ENCODE measurements at regions of chr22 and their contacts with region 1.

Region 1: GRCh38 chr22:23178512-23179254 is 1.6 kb upstream of the BCR start:
- DNase-seq: peak; percentile 55 to 84 (median 67)
- ATAC-seq: peak; percentile 57 to 69 (median 64)
- H3K4me3 ChIP-seq: peak overlapping the region in 1 of 12 donors; percentile 2
- H3K27ac ChIP-seq: peak overlapping the region in 3 of 12 donors; percentile 64 to 85 (median 84)
- H3K4me1 ChIP-seq: peaks cover 11 to 46% (median 41%) of the 10 kb centered on the region in 12 donors
- H3K27me3 ChIP-seq: no peaks in the 10 kb centered on the region
- CTCF ChIP-seq: peak; percentile 94 to 99 (median 97)
- POLR2A ChIP-seq: no peak

Region 2: GRCh38 chr22:23219822-23220484 is 41.3 kb after region 1 on chr22:
- intact Hi-C with region 1: loop called in 7 of 10 experiments (anchors 5 kb)
- DNase-seq: peak in 2 of 5 donors; percentile 40 to 56
- ATAC-seq: no peak
- H3K4me3 ChIP-seq: no peak overlapping the region
- H3K27ac ChIP-seq: peak overlapping the region in 8 of 12 donors; percentile 11 to 69 (median 23)
- H3K4me1 ChIP-seq: peaks cover 36 to 100% (median 87%) of the 10 kb centered on the region in 12 donors
- H3K27me3 ChIP-seq: no peaks in the 10 kb centered on the region
- CTCF ChIP-seq: no peak
- POLR2A ChIP-seq: peak in 1 of 2 donors; percentile 14

Region 3: GRCh38 chr22:23225724-23226496 is 47.2 kb after region 1 on chr22:
- intact Hi-C with region 1: loop called in 5 of 10 experiments (anchors 5 kb)
- DNase-seq: peak in 4 of 5 donors; percentile 41 to 80 (median 54)
- ATAC-seq: peak; percentile 34 to 80 (median 74)
- H3K4me3 ChIP-seq: no peak overlapping the region
- H3K27ac ChIP-seq: peak overlapping the region; percentile 57 to 83 (median 70)
- H3K4me1 ChIP-seq: peaks cover 23 to 72% (median 59%) of the 10 kb centered on the region in 12 donors
- H3K27me3 ChIP-seq: no peaks in the 10 kb centered on the region
- CTCF ChIP-seq: no peak
- POLR2A ChIP-seq: no peak

Region 4: DNA sequence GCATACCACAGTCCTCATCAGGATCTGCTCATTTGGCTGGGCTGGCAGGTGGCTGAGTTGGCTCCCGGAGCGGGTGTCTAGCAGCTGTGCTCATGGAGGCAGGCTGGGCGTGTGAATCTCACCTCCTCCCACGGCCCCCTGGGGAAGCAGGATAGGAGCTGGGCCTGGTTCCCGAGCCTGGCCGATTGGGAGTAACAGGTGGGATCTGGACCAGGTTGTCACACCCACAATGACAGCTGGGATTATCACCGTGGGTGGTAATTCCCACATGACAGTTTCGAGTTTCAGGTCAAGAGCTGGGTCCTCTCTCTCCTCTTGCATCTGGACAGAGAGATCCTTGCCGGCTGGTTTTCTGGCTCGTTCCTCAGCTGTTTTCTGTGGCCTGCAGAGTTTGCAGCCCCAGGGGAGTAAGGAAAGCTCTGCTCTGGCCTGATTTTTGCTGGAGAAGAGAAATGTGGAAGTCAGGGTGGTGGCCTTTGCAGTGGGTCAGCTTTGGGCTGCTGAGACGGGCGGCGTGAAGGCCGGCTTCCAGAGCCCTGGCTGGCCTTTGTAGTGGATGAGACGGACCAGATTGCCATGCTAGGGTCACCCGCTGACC is 58.6 kb after region 1 on chr22:
- intact Hi-C with region 1: loop called in 4 of 10 experiments (anchors 2 to 5 kb)
- DNase-seq: peak; percentile 83 to 93 (median 87)
- ATAC-seq: peak; percentile 56 to 78 (median 72)
- H3K4me3 ChIP-seq: no peak overlapping the region
- H3K27ac ChIP-seq: peak overlapping the region in 9 of 12 donors; percentile 4 to 61 (median 20)
- H3K4me1 ChIP-seq: peaks cover 0 to 71% (median 30%) of the 10 kb centered on the region in 12 donors
- H3K27me3 ChIP-seq: no peaks in the 10 kb centered on the region
- CTCF ChIP-seq: no peak
- POLR2A ChIP-seq: no peak

Region 5: DNA sequence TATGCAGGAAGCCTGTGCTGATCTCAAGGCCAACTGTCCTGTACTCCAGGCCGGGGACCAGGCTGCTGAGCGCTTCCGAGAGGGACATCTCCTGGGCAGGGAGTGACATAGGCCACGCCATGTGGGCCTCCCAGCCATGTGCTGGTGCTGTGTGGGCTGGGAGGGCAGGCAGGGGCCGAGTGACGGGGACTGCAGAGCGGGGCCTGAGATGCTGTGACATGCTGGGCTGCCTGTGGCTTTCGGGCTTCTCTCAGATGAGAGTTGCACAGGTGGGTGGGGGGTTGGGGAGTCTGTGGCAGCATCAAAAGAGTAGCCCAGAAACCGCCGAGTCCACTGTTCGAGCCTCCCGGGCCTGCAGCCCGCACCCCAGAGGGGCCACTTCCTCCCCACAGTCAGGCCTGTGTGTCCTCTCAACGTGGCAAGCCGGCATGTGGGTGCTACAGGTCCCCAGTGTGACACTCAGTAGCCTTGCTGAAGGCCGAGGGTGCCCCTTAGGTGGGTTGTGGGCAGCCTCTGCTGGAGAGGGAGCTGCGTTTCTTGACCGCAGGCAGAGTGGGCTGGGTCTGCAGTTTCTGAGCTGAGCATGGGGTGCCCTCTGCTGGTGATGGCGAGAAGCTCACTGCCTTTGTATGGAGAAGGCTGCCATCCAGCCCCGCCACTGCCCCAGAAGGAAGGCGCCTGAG is 102.9 kb after region 1 on chr22:
- intact Hi-C with region 1: loop called (anchors 1 to 2 kb)
- DNase-seq: peak; percentile 83 to 89 (median 84)
- ATAC-seq: peak; percentile 69 to 83 (median 74)
- H3K4me3 ChIP-seq: no peak overlapping the region
- H3K27ac ChIP-seq: peak overlapping the region in 6 of 12 donors; percentile 33 to 82 (median 48)
- H3K4me1 ChIP-seq: peaks cover 0 to 33% (median 19%) of the 10 kb centered on the region in 12 donors
- H3K27me3 ChIP-seq: no peaks in the 10 kb centered on the region
- CTCF ChIP-seq: peak; percentile 85 to 98 (median 94)
- POLR2A ChIP-seq: peak in 1 of 2 donors; percentile 24

Region 6: DNA sequence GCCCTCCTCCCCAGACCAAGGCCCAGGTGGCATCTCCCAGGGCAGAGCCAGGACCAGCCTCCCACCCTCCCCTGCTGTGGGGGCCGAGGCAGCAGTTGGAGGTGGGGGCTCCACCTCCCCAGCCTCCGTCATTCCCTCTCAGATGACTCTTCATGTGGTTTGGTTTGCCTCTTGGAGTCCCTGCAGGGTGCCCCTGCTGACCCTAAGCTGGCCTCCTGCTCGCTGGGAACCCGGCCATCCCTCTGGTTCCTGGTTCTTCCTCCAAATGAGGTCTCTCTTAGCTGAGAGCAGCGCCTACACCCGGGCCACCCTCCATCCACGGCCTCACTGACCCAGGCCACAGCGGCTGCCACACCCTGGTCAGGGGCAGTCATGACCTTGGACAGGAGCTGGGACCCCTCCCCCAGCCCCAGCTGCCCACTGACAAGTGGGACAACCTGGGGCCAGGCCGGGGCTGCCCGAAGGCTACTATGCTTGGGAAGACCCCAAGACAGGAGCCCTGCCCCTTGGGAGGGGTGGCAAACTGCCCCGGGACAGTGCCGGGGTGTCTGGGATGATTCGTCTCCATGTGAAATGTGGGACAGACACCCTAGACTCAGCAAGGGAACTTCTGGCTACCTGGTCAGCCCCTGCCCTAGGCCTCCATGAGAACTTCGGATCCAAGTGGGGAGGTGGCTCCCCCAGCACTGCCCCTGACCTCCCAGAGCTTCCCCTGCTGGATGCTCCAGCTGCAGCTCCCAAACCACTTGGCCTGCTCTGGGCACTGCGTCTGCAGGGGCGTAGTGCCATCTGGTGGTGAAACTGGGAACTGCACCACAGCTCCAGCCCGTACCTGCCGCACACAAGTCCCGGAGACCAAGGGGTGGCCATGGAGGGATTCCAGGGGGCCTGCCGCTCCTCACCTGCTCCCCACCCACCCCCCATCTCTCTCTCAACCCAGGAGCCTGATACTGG is 206.9 kb after region 1 on chr22:
- intact Hi-C with region 1: loop called in 6 of 10 experiments (anchors 1 to 10 kb)
- DNase-seq: peak; percentile 68 to 89 (median 77)
- ATAC-seq: peak; percentile 49 to 89 (median 82)
- H3K4me3 ChIP-seq: no peak overlapping the region
- H3K27ac ChIP-seq: no peak overlapping the region
- H3K4me1 ChIP-seq: peaks cover 0 to 9% (median 0%) of the 10 kb centered on the region in 12 donors
- H3K27me3 ChIP-seq: peaks cover 0 to 8% (median 0%) of the 10 kb centered on the region in 9 donors
- CTCF ChIP-seq: peak; percentile 92 to 100 (median 98)
- POLR2A ChIP-seq: no peak